Ovary (tissue), 10 donors: ENCODE measurements at regions of chr1 and their contacts with region 1.

Region 1: DNA sequence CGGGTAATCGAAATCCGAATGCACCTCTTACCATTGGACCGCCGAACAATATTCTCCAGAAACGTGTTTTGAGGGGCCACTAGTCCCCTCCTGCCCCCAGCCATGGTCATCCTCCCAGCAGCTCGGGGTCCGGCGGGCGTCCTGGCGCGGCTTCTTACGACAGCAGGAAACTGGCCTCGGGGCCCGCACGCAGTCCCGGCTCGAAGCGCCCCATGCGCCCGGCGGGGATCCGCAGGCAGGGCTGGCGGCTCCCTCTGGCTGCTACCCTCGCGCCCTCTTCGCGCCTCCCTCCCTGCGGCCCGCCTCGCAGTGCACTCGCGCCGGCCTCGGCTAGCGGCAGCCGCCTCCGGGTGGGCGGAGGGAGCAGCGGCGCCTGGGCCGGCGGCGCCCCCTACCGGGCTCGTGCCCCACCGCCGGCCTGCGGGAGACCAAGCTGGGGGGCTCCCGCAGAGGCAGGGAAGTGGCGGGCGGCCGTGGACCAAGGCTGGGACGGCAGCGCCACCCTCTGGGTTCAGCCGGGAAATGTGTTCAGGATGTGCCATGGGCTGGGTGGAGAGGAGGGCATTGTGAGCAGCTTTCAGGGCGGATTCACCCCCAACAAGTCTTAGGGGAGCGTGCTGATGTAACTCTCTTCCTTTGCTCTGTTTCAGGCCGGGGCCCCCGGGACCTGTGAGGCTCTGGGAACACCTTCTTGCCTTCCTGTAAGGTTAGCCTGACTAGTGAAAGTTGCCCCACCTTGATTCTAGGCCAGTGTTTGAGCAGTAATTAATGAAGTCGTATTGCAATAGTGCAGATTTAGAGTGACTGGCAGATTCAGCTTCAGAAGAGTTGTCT is at the start of gene KCNH1:
- DNase-seq: peak; percentile 40 to 82 (median 59)
- H3K4me3 ChIP-seq: peak within 1 kb of the TSS; percentile 31
- H3K27ac ChIP-seq: no peak within 1 kb of the TSS
- H3K4me1 ChIP-seq: peaks cover 2% of the 10 kb centered on the region
- H3K27me3 ChIP-seq: no peaks in the 10 kb centered on the region
- CTCF ChIP-seq: peak; percentile 40 to 80 (median 70)
- EP300 ChIP-seq: no peak
- POLR2A ChIP-seq: no peak
- total RNA-seq, gene KCNH1: 0.11 to 0.46 TPM in 2 of 7 donors, not detected in the others

Region 2: DNA sequence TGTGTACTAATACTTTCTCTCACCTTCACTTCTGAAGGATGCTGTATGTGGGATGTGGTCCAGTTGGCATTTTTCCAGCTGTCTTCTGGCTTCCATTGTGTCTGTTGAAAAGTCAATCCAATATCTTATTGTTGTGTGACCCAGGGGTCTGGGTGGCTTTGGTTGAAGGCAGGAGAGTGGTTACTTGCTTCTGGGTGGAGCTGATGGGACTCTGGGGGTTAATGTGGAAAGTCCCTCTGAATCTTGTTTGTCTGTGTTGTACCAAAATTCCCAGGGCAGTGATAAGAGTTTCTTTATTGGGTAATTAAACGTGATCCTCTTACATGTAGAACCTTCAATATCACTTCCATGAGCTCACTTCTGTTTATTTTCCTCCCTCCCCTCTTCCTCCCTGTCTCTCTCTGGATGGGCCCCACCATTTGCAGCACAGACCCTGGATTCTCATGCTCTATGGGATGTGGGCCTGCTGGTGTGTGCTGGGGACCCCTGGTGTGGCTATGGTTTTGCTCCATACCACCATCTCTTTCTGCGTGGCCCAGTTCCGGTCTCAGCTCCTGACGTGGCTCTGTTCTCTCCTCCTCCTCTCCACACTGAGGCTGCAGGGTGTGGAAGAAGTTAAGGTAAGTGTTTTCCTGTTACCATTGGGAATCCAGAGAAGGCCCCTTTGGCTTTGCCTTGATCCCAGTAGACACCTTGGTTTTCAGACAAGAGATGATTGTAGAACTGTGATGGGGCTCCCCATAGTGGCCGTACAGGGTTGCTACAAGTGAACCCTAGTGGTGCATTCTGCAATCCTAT is 733.8 kb before region 1 on chr1:
- intact Hi-C with region 1: loop called in 1 of 4 experiments (anchors 10 kb)
- DNase-seq: peak; percentile 25 to 61 (median 36)
- H3K4me3 ChIP-seq: no peak overlapping the region
- H3K27ac ChIP-seq: no peak overlapping the region
- H3K4me1 ChIP-seq: peaks cover 2% of the 10 kb centered on the region
- H3K27me3 ChIP-seq: no peaks in the 10 kb centered on the region
- CTCF ChIP-seq: peak; percentile 19 to 54 (median 44)
- EP300 ChIP-seq: no peak
- POLR2A ChIP-seq: no peak

Region 3: DNA sequence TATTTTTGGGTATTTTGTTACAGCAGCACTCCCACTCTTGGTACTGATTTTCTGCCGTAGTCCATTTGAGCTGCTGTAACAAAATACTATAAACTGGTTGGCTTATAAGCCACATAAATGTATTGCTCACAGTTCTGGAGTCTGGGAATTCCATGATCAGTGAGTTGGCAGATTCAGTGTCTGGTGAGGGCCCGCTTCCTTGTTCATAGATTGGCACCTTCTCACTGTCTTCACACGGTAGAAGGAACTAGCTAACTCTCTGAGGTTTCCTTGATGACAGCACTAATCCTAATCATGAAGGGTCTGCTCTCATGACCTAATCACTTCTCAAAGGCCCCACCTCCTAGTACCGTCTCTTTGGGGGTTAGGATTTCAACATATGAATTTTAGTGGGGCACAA is 720.1 kb before region 1 on chr1:
- intact Hi-C with region 1: loop called in 2 of 4 experiments (anchors 5 to 10 kb)
- DNase-seq: no peak
- H3K4me3 ChIP-seq: no peak overlapping the region
- H3K27ac ChIP-seq: no peak overlapping the region
- H3K4me1 ChIP-seq: no peaks in the 10 kb centered on the region
- H3K27me3 ChIP-seq: no peaks in the 10 kb centered on the region
- CTCF ChIP-seq: no peak
- EP300 ChIP-seq: no peak
- POLR2A ChIP-seq: no peak

Region 4: GRCh38 chr1:210448297-210448892 is 685.7 kb before region 1 on chr1:
- intact Hi-C with region 1: loop called in 1 of 4 experiments (anchors 5 kb)
- DNase-seq: no peak
- H3K4me3 ChIP-seq: no peak overlapping the region
- H3K27ac ChIP-seq: no peak overlapping the region
- H3K4me1 ChIP-seq: no peaks in the 10 kb centered on the region
- H3K27me3 ChIP-seq: no peaks in the 10 kb centered on the region
- CTCF ChIP-seq: peak in 2 of 3 donors; percentile 20 to 27
- EP300 ChIP-seq: no peak
- POLR2A ChIP-seq: no peak

Region 5: DNA sequence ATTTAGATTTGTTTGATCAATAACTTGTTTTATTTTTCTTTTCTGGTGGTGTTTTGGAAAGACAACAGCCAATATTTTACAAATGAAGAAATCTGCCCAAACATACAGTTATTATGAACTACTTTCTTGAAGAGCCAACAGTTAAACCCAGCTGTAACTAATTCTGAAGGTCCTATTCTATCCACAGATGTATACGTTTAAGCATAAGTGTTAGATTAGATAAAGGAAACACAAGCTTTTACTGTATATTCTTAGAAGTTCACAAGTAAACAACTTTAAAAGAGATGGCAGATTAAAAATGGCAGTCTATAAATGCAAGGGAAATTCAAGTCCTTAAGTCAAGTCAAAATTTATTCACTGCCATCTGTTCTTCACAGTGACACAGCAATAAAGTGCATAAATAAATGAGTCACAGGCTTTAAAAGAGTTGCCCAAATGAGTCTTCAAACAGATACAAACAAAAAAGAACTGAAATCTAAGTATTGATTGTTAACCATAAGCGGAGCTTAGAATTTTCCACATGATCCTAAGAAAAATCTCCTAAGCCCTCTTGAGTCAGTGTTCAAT is 49.8 kb after region 1 on chr1:
- intact Hi-C with region 1: no loop called
- DNase-seq: no peak
- H3K4me3 ChIP-seq: no peak overlapping the region
- H3K27ac ChIP-seq: no peak overlapping the region
- H3K4me1 ChIP-seq: no peaks in the 10 kb centered on the region
- H3K27me3 ChIP-seq: no peaks in the 10 kb centered on the region
- CTCF ChIP-seq: no peak
- EP300 ChIP-seq: no peak
- POLR2A ChIP-seq: no peak